Heart left ventricle (tissue), 16 donors: ENCODE measurements at regions of chr6 and their contacts with region 1.

Region 1: DNA sequence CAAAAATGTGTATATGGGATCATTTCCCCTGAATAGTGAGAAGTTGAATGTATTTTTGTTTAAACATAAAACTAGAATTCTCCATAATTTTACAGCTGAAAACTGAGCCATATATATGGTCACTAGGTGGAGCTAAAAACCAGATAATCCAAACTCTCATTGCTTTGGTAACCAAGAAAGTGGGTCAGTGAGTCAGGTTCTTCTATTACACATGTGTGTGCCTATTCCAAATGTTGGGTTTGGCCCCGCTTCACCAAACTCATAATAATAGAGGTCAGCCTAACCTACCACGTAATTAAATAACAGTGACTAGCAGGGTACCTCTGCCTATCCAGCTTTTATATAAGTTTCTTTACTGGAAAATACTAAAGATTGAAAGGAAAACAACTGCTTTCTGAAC is 19.3 kb upstream of the RNGTT start:
- DNase-seq: peak in 4 of 5 donors; percentile 36 to 43 (median 42)
- ATAC-seq: peak; percentile 85 to 98 (median 92)
- H3K4me3 ChIP-seq: peak overlapping the region in 2 of 12 donors; percentile 11 to 28
- H3K27ac ChIP-seq: no peak overlapping the region
- H3K4me1 ChIP-seq: peaks cover 0 to 10% (median 7%) of the 10 kb centered on the region in 12 donors
- H3K27me3 ChIP-seq: no peaks in the 10 kb centered on the region
- CTCF ChIP-seq: peak; percentile 58 to 87 (median 76)
- POLR2A ChIP-seq: no peak

Region 2: GRCh38 chr6:88933521-88933920 is 49.2 kb before region 1 on chr6:
- intact Hi-C with region 1: no loop called
- DNase-seq: no peak
- ATAC-seq: no peak
- H3K4me3 ChIP-seq: no peak overlapping the region
- H3K27ac ChIP-seq: no peak overlapping the region
- H3K4me1 ChIP-seq: no peaks in the 10 kb centered on the region
- H3K27me3 ChIP-seq: no peaks in the 10 kb centered on the region
- CTCF ChIP-seq: no peak
- POLR2A ChIP-seq: no peak

Region 3: DNA sequence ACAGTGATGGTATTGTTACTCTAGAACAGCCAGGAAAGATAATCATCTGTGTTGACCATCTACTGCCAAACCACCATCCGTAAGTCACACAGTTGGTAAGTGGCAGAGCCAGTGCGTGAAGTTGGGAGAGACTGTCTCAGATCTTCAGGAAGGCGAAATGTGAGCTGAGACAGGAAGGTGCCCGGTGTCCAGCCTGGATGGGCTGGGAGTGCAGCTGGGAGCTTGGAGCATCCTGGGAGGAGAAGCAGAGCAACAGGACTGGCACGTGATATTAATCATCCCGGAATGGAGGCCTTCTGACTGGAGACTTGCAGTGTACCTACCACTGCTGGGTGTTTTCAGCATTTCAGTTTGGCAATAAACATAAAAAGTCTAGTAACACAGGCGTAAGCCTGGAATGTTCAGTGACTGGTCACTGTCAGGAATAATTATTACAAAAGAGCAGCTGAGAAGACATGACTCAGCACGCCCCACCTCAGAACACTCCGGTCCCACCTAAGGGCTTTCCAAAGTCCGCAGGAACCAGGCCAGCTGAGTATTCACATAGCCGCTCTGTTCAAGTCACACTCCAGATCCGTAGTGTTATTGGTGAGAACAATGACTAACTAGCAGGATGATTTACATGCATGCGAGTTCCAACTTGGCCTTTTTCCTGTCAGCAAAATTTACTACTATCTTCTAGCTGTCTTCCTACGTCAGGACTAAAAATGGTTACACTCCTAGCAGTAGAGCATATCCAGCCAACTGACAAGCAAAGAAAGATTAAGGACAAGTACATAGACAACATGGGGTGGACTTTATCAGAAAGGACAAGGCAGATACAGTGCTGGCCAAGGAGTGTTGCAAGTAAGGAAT is 52.8 kb after region 1 on chr6:
- intact Hi-C with region 1: loop called in 7 of 10 experiments (anchors 1 to 10 kb)
- DNase-seq: peak; percentile 66 to 95 (median 71)
- ATAC-seq: peak; percentile 92 to 96 (median 94)
- H3K4me3 ChIP-seq: peak overlapping the region in 10 of 12 donors; percentile 0 to 29 (median 14)
- H3K27ac ChIP-seq: peak overlapping the region; percentile 62 to 97 (median 82)
- H3K4me1 ChIP-seq: peaks cover 4 to 54% (median 25%) of the 10 kb centered on the region in 12 donors
- H3K27me3 ChIP-seq: no peaks in the 10 kb centered on the region
- CTCF ChIP-seq: no peak
- POLR2A ChIP-seq: no peak

Region 4: DNA sequence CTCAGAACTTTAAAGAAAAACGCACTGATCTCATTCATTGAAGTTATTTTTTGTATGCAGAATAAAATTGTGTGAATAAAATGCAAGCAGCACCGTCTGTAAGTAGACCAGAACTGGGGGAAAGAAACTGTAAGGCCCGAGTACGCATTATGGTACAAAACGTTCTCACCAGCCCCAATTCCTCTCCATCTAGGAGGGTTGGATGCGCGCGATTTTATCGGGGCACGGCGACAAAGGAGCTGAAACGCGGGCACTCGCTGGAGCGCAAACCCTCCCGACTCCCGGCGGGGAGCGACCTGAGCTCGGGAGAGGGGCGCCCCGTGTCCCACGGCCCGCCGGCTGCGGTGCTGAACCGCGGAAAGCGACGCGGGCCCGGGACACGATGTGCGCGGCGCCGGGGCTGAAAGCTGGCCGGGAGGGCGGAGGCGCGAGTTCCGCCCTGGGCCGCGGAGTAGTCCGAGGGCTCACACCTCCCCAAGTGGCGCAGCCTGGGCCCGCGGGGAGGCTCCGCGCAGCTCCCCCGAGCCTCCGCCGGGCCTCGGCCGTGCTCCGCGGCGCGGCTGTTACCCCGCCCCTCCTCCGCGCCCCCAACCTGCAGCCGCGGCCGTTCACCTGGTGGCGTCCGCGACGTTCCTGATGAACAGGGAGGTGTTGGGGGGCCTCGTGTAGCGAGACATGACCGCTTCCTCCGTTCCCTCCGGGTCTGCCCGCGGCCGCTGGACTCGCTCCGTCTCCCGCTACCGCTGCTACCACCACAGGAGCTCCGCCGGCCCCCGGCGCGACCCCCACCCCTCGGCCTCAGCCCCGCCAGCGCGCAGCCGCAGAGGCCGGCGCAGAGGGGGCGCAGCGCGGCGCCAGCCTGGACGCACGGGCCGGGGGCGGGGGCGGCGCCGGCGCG is 134.7 kb after region 1 on chr6 and contains the start of gene SRSF12:
- intact Hi-C with region 1: loop called in 7 of 10 experiments (anchors 2 to 10 kb)
- DNase-seq: peak; percentile 20 to 74 (median 36)
- ATAC-seq: peak; percentile 38 to 92 (median 87)
- H3K4me3 ChIP-seq: peak within 1 kb of the TSS; percentile 63 to 89 (median 74)
- H3K27ac ChIP-seq: peak within 1 kb of the TSS in 4 of 12 donors; percentile 9 to 61 (median 29)
- H3K4me1 ChIP-seq: peaks cover 0 to 14% (median 6%) of the 10 kb centered on the region in 12 donors
- H3K27me3 ChIP-seq: no peaks in the 10 kb centered on the region
- CTCF ChIP-seq: no peak
- POLR2A ChIP-seq: no peak
- total RNA-seq, gene SRSF12: 0.14 to 0.48 (median 0.16) TPM in 5 of 9 donors, not detected in the others

Region 5: GRCh38 chr6:89122625-89123024 is 139.9 kb after region 1 on chr6:
- intact Hi-C with region 1: loop called in 7 of 10 experiments (anchors 2 to 10 kb)
- DNase-seq: no peak
- ATAC-seq: peak; percentile 53 to 81 (median 60)
- H3K4me3 ChIP-seq: no peak overlapping the region
- H3K27ac ChIP-seq: no peak overlapping the region
- H3K4me1 ChIP-seq: peaks cover 0 to 5% (median 0%) of the 10 kb centered on the region in 12 donors
- H3K27me3 ChIP-seq: no peaks in the 10 kb centered on the region
- CTCF ChIP-seq: peak; percentile 22 to 65 (median 54)
- POLR2A ChIP-seq: no peak

Region 6: DNA sequence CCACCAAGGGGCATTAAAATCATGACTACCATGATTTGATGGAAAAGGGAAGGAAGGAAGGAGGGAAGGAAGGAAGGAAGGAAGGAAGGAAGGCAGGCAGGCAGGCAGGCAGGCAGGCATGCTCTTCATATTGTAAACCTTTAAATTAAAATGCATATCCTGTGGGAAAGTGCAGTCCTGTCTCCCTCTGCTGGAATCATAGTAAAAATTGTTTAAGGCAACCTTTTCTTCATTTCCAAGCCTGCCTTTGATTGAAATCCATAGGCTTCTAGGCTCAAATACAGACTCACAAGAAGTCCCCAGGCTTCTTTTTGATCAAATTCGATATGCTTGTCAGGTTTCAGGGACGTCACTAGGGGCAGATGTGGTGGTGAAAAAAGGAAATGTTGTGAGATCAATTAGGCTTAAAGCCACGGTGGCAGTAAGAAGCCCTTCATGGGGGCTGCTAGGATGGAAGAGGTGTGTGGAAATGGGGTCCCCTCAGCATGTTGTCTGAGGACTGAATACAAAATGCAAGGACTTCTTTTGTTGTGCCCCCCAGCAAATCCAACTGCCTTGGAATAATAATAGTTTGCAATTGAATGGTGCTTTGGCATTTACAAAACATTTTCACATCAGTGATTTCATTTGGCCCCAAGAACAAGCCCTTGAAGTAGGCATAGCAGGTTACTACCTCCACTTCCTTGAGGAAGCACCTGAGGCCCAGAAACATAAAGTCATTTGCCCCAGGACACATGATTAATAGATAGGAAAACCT is 260.0 kb after region 1 on chr6:
- intact Hi-C with region 1: loop called (anchors 1 to 5 kb)
- DNase-seq: no peak
- ATAC-seq: peak in 1 of 4 donors; percentile 49
- H3K4me3 ChIP-seq: no peak overlapping the region
- H3K27ac ChIP-seq: no peak overlapping the region
- H3K4me1 ChIP-seq: peaks cover 0 to 3% (median 0%) of the 10 kb centered on the region in 12 donors
- H3K27me3 ChIP-seq: no peaks in the 10 kb centered on the region
- CTCF ChIP-seq: peak in 11 of 12 donors; percentile 22 to 63 (median 54)
- POLR2A ChIP-seq: no peak

Region 7: DNA sequence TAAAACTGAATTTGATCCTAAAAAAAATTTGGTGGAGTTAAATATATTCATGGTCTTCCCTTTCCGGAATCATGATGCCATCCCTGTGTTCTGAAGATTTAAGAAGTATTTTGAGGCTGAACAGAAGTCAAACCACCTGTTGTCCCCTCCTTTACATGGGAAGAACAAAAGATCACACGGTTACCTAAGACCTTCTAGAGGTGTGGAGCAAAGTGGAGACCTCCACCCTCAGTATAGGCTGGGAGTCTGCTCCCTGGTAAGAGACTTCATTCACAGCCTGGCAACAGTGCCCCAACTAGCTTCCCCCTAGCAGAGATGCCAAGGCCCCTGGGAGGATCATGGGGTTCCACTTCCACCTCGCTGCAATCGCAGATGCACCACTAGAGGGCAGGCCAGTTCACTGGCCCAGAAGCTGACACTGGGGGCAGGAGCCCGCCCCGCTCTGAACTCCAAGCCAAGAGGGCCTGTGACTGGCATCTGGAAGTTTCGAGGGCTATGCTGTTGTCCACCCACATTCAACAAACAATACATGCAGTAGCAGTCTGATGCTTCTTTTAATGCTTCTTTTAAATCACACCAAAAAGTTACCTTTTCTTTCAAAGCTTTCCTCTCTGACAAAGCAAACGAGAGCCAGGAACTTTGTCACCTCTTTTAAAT is 389.3 kb after region 1 on chr6:
- intact Hi-C with region 1: loop called in 9 of 10 experiments (anchors 2 to 10 kb)
- DNase-seq: peak; percentile 74 to 86 (median 85)
- ATAC-seq: peak; percentile 71 to 92 (median 88)
- H3K4me3 ChIP-seq: no peak overlapping the region
- H3K27ac ChIP-seq: peak overlapping the region in 8 of 12 donors; percentile 1 to 71 (median 36)
- H3K4me1 ChIP-seq: peaks cover 0 to 28% (median 21%) of the 10 kb centered on the region in 12 donors
- H3K27me3 ChIP-seq: no peaks in the 10 kb centered on the region
- CTCF ChIP-seq: peak; percentile 88 to 98 (median 94)
- POLR2A ChIP-seq: no peak